GM12878 (cell line): ENCODE measurements at regions of chr1 and their contacts with region 1.

Region 1: DNA sequence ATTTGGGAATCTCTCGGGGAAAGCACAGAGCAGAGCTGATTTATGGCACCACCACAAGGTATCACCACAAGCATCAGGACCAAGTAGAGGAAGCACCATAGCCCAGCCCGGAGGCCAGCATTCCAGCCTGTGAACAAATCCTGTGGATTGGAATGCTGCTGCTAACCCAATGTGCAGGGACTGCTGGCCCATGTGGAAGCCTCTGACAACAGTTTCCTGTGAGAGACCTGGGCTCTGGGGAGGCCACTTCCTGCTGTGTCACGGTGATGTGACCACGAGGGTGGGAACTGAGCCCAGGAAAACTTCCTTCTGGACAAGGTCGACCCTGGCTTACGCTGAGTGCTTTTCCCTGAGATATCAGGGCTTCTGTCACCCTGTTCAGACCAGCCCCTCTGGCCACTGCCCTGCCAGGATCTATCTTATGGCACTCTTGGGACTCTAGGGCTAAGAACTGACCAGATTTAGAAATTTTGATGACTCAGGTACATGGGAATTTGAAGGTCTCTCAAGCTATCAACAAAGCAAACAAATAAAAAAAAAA is 88.3 kb upstream of the NGF start:
- DNase-seq: no peak
- ATAC-seq: no peak
- H3K4me3 ChIP-seq: no peak overlapping the region
- H3K27ac ChIP-seq: no peak overlapping the region
- H3K4me1 ChIP-seq: no peaks in the 10 kb centered on the region
- H3K27me3 ChIP-seq: no peaks in the 10 kb centered on the region
- CTCF ChIP-seq: no peak
- EP300 ChIP-seq: no peak
- POLR2A ChIP-seq: no peak
- RAD21 ChIP-seq: no peak

Region 2: DNA sequence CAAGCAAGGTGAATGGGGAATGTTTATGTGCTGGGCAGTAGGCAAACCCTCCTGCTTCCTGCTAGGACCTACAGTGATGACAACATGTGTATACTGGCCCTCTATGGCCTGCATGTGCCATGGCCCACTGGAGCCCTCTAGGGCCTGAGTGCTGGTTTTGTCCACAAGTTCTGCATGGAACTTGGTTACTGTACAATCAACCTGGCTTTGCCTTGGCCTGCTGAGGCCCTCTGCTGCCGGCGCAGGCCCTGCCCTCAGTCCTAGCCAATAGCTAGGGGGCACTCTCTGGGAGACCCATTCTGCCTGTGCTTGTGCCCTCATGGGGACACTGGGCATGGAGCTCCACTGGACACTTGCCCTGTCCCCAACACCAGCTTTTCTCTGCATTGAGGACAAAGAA is 50.3 kb after region 1 on chr1:
- CTCF ChIA-PET with region 1: no interaction called
- POLR2A ChIA-PET with region 1: no interaction called
- RAD21 ChIA-PET with region 1: no interaction called
- SMC1A ChIA-PET with region 1: no interaction called
- in situ Hi-C with region 1: loop called (anchors 10 kb)
- intact Hi-C with region 1: no loop called
- DNase-seq: no peak
- ATAC-seq: no peak
- H3K4me3 ChIP-seq: no peak overlapping the region
- H3K27ac ChIP-seq: no peak overlapping the region
- H3K4me1 ChIP-seq: no peaks in the 10 kb centered on the region
- H3K27me3 ChIP-seq: no peaks in the 10 kb centered on the region; a peak in 1 of 4 replicates
- CTCF ChIP-seq: no peak
- EP300 ChIP-seq: no peak
- POLR2A ChIP-seq: no peak
- RAD21 ChIP-seq: no peak